Activated T-helper 1 cell treated with anti-CD3 and anti-CD28 coated beads, Interleukin-12 subunit alpha, Interleukin-12 subunit beta, Interleukin-2, Interleukin-4 antibody, amounts not matched to agents 30 ng/mL and 10 ng/mL and 1 ng/mL, durations not matched to agents 14 hours and 24 hours and 36 hours (primary cell): ENCODE measurements at regions of chr14 and their contacts with region 1.

Region 1: GRCh38 chr14:96796851-96797581 is at the start of gene VRK1:
- DNase-seq: peak; percentile 91
- H3K4me3 Mint-ChIP-seq: peak within 1 kb of the TSS; percentile 91
- H3K27ac Mint-ChIP-seq: peak within 1 kb of the TSS; percentile 82
- H3K4me1 Mint-ChIP-seq: peaks cover 45% of the 10 kb centered on the region
- H3K27me3 Mint-ChIP-seq: peaks cover 9% of the 10 kb centered on the region
- total RNA-seq, gene VRK1: 72.1 and 79.4 TPM in 2 replicates

Region 2: DNA sequence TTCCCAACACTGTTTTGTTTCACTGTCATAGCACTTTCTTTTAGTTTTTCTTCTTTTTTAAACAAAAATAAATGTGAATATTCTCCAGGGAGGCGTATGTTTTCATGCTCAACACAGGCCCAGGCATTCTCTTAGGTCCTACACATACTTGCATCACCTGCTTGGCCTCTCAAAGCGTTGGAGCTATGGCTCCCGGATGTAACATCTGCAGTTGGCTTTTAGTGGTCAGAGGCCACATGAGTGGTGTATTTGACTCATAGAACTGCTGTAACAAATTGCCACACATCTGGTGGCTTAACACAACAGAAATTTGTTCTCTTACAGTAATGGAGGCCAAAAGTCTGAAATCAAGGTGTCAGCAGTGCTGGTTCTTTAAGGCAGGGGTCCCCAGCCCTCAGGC is 44.4 kb before region 1 on chr14:
- intact Hi-C with region 1: no loop called
- DNase-seq: no peak
- H3K4me3 Mint-ChIP-seq: no peak overlapping the region
- H3K27ac Mint-ChIP-seq: no peak overlapping the region
- H3K4me1 Mint-ChIP-seq: no peaks in the 10 kb centered on the region
- H3K27me3 Mint-ChIP-seq: peaks cover 6% of the 10 kb centered on the region

Region 3: GRCh38 chr14:96762650-96763049 is 34.4 kb before region 1 on chr14:
- intact Hi-C with region 1: loop called (anchors 1 kb)
- DNase-seq: peak; percentile 4
- H3K4me3 Mint-ChIP-seq: no peak overlapping the region
- H3K27ac Mint-ChIP-seq: no peak overlapping the region
- H3K4me1 Mint-ChIP-seq: peaks cover 5% of the 10 kb centered on the region
- H3K27me3 Mint-ChIP-seq: peaks cover 4% of the 10 kb centered on the region

Region 4: DNA sequence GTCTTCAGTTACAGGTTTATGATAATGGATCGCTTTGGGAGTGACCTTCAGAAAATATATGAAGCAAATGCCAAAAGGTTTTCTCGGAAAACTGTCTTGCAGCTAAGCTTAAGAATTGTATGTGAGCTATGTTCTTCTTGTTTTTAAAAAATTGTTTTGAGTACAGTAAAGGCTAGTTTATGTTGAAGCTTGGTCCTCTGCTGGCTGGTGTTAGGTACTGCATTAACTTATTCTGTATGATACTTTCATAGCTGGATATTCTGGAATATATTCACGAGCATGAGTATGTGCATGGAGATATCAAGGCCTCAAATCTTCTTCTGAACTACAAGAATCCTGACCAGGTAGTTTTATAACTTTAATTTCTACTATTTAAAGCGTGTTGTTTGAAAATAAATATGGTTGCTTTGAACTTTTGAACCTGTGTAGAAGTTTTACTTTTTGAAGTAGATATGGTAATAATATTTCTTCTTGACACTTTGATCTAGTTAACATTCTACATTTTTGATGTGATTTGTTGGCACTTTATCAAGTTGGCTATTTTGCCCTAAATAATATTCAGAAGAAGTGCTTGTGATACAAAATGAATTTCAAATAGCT is 55.9 kb after region 1 on chr14:
- intact Hi-C with region 1: loop called (anchors 1 kb)
- DNase-seq: no peak
- H3K4me3 Mint-ChIP-seq: no peak overlapping the region
- H3K27ac Mint-ChIP-seq: peak overlapping the region; percentile 6
- H3K4me1 Mint-ChIP-seq: peaks cover 17% of the 10 kb centered on the region
- H3K27me3 Mint-ChIP-seq: no peaks in the 10 kb centered on the region